Dendritic cell treated with granulocyte-macrophage colony-stimulating factor and Interleukin-4, amounts not matched to agents 40 ng/mL and 50 ng/mL, for 4 days (primary cell): ENCODE measurements at regions of chr7 and their contacts with region 1.

Region 1: DNA sequence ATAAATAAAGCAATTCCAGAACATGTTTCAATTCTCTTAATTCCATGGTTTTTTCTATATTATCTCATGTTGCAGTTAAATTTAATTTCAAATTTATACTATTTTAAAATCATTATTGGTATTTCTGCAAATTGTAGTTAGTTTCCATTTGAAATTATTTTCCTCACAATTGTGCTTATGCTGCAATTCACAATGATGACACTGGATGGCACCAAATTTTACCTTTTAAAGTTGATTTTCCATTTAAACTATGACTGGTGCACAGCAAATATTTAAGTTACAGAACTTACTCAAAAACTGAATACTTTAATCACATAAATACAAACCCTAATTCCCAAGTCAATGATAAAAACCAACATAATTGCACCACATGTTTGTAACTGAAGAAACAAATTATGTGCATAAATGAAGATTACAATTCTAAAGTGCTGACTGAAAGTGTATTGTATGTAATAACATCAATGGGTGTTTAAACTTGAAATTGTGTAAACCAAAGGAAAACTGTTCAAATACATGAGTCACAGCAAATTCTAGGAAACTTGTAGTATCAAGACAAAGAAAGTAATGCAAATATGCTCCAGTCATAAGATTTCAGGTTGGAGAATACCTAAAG is 75.3 kb upstream of the AASS start:
- H3K4me3 Mint-ChIP-seq: no peak overlapping the region
- H3K27ac Mint-ChIP-seq: no peak overlapping the region
- H3K4me1 Mint-ChIP-seq: no peaks in the 10 kb centered on the region
- H3K27me3 Mint-ChIP-seq: no peaks in the 10 kb centered on the region

Region 2: DNA sequence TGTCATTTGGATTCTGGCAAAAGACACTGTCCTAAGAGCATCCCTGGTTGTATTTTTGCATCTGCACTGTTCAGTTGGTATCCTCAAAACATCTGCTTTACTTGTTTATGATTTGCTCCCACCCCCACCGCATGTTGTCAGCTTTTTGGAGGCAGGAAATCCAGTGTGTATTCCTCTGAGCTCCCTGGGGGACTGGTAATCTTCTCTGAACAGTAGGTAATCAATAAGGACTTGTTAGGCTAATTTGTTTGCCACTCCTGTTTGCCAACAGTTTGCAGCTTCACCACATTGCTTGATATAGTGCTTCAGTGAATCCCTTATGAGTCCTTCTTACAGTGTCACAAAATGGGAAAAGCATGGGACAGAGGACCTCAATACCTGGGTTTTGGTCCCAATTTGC is 36.1 kb after region 1 on chr7:
- intact Hi-C with region 1: no loop called
- H3K4me3 Mint-ChIP-seq: no peak overlapping the region
- H3K27ac Mint-ChIP-seq: no peak overlapping the region
- H3K4me1 Mint-ChIP-seq: no peaks in the 10 kb centered on the region
- H3K27me3 Mint-ChIP-seq: no peaks in the 10 kb centered on the region

Region 3: GRCh38 chr7:122528879-122529481 is 309.6 kb after region 1 on chr7:
- intact Hi-C with region 1: loop called (anchors 10 kb)
- H3K4me3 Mint-ChIP-seq: no peak overlapping the region
- H3K27ac Mint-ChIP-seq: no peak overlapping the region
- H3K4me1 Mint-ChIP-seq: no peaks in the 10 kb centered on the region
- H3K27me3 Mint-ChIP-seq: no peaks in the 10 kb centered on the region